Sigmoid colon (tissue), 7 donors: ENCODE measurements at regions of chr2 and their contacts with region 1.

Region 1: GRCh38 chr2:68467077-68467960 is at the starts of genes APLF and FBXO48:
- DNase-seq: peak; percentile 99
- H3K4me3 ChIP-seq: peak within 1 kb of the TSS; percentile 69 to 90 (median 88)
- H3K27ac ChIP-seq: peak within 1 kb of the TSS; percentile 83 to 93 (median 88)
- H3K4me1 ChIP-seq: peaks cover 0 to 25% (median 18%) of the 10 kb centered on the region in 4 donors
- H3K27me3 ChIP-seq: no peaks in the 10 kb centered on the region
- CTCF ChIP-seq: no peak
- EP300 ChIP-seq: peak in 1 of 4 donors; percentile 5
- POLR2A ChIP-seq: peak in 1 of 2 donors; percentile 9
- total RNA-seq, gene APLF: 11.0 to 21.7 (median 14.5) TPM
- total RNA-seq, gene FBXO48: 0.55 to 1.1 (median 0.83) TPM

Region 2: GRCh38 chr2:68434981-68435380 is 32.3 kb before region 1 on chr2:
- intact Hi-C with region 1: no loop called
- DNase-seq: no peak
- H3K4me3 ChIP-seq: no peak overlapping the region
- H3K27ac ChIP-seq: peak overlapping the region in 2 of 4 donors; percentile 43 to 49
- H3K4me1 ChIP-seq: peaks cover 0 to 24% (median 12%) of the 10 kb centered on the region in 4 donors
- H3K27me3 ChIP-seq: no peaks in the 10 kb centered on the region
- CTCF ChIP-seq: no peak
- EP300 ChIP-seq: no peak
- POLR2A ChIP-seq: no peak

Region 3: DNA sequence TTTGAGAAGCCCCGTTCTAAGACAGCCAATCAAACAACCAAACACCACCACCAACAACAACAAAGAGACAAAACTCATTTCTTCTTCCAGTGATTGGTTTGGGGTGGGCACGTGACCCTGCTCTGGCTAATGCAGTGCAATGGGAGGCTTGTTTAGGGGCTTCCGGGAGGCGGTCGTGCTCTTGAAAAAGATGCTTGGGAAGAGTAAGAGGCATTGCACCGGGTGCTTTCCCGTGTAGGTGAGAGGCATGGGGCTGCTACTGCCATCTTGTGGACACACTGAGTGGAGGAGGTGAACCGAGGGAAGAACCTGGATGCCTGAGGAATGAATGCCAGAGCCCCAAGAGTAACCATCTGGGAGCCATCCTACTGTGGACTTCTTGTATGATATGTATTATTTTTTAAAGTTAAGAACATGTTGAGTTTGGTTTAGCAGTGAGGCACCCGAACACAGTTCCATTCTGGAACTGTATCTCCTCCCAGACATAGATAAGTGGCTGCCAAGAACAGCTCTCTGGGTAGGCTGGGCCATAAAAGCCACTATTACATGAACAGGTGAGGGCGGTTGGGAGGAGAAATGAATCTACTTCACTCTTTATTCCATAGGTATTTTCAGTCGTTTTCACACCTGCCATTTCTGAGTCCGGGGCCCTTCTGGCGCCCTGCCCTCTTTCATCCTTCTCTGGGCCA is 248.2 kb after region 1 on chr2:
- intact Hi-C with region 1: loop called (anchors 5 kb)
- DNase-seq: no peak
- H3K4me3 ChIP-seq: no peak overlapping the region
- H3K27ac ChIP-seq: no peak overlapping the region
- H3K4me1 ChIP-seq: peaks cover 0 to 5% (median 0%) of the 10 kb centered on the region in 4 donors
- H3K27me3 ChIP-seq: no peaks in the 10 kb centered on the region
- CTCF ChIP-seq: peak in 3 of 4 experiments; percentile 37 to 61 (median 46)
- EP300 ChIP-seq: no peak
- POLR2A ChIP-seq: no peak

Region 4: DNA sequence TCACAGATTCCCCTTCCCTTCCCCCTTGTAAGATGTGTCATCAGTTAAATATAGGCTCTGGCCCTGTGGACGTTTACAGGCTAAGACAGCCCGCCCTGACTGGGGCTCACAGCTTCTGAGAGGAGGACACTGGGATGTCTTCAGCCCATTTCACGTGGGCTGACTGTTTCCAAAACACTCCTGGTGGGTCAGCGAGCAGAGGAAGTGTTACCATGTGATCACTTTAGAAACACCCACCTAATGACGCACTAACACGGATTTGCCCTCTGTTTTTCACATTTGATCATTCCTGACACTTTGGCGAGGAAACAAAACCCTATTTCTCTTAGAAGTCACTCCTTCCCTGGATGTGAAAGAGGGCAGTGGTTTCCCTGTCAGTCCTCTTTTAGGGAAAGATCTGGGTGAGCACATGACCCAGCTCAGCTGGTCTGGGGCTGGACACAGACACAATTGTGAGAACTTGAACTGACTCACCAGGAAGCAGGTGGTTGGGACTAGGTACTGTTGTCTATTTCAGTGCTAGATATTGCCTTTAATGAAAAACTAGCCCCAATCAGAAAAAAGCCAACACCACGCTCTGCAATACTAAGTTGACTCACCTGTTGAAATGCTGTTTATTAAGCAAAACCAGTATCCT is 365.0 kb after region 1 on chr2:
- intact Hi-C with region 1: loop called (anchors 5 kb)
- DNase-seq: peak; percentile 81
- H3K4me3 ChIP-seq: no peak overlapping the region
- H3K27ac ChIP-seq: peak overlapping the region; percentile 56 to 83 (median 78)
- H3K4me1 ChIP-seq: peaks cover 0 to 37% (median 37%) of the 10 kb centered on the region in 4 donors
- H3K27me3 ChIP-seq: no peaks in the 10 kb centered on the region
- CTCF ChIP-seq: no peak
- EP300 ChIP-seq: no peak
- POLR2A ChIP-seq: no peak

Region 5: DNA sequence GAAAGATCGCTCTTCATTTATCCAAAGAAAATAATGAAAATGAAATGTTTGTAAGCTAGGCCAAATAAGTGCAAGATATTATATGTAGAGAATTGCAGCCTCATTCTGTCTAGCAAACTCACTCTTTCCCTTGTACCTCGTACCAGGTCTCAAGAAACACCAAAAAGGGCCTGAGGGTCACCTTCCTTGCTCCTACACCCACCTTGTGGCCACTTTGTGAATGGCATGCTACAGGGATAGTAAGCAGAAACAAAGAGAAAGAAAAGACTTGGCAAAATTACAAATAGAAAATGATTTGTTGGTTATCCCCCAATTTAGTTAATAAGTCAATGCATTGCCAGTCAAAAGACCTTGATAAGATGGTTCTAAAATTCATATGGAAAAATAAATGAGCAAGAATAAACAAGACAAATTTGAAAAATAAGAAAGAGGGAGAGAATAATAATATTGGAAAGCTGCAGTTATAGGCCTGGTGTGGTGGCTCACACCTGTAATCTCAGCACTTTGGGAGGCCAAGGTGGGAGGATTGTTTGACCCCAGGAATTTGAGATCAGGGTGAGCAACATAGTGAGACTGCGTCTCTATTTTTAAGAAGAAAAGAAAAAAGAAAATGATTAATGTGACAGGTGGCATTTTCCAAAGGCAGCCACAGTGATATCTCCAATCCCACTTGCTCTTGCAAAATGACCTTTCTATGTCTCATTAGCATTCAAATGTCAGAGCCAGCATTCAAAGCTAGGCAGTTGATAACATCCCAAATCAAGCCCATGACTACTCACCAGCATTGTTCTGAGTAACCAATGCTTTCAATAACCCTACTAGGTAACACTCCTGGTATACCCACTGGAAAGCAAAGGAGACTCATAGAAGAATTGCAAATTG is 442.7 kb after region 1 on chr2:
- intact Hi-C with region 1: loop called (anchors 5 kb)
- DNase-seq: peak; percentile 81
- H3K4me3 ChIP-seq: no peak overlapping the region
- H3K27ac ChIP-seq: no peak overlapping the region
- H3K4me1 ChIP-seq: peaks cover 0 to 19% (median 11%) of the 10 kb centered on the region in 4 donors
- H3K27me3 ChIP-seq: no peaks in the 10 kb centered on the region
- CTCF ChIP-seq: peak; percentile 66 to 86 (median 84)
- EP300 ChIP-seq: no peak
- POLR2A ChIP-seq: no peak